HAP-1 (cell line): ENCODE measurements at regions of chr1 and their contacts with region 1.

Region 1: DNA sequence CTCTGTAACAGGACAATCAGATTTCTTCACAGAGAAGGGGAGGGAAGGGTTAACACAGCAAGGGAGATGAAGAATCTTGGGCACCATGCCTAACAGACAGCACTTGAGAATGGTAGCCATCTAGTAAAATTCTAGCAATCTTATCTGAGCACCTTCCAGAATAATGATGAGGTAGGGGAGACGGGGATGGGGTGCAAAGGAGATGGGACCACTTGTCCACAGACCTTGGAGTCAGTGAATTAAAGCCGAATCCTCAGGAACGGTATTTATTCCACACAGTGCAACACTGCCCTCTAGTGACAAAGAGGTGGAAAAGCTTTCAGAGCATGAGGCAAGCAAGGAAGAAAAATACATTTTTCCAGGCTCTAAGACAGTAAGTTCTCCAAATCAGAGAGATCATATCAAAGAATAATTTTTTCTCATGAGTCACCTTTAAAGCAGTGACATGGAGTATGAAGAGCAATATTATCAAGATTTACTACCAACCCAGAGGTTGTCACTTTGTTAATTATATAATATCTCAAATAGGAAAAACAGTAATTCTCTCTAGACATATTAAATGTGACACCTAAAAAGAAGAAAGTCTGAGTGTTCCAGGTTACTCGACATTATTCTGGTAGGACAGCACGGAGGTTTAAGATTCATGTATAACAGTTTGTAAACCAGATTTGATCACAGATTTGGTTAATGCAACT is 43.3 kb upstream of the LPAR3 start:
- DNase-seq: peak; percentile 41 to 71
- H3K4me3 ChIP-seq: no peak overlapping the region
- H3K4me1 ChIP-seq: no peaks in the 10 kb centered on the region; the same call in 1 of the 2 replicates
- H3K27me3 ChIP-seq: no peaks in the 10 kb centered on the region

Region 2: DNA sequence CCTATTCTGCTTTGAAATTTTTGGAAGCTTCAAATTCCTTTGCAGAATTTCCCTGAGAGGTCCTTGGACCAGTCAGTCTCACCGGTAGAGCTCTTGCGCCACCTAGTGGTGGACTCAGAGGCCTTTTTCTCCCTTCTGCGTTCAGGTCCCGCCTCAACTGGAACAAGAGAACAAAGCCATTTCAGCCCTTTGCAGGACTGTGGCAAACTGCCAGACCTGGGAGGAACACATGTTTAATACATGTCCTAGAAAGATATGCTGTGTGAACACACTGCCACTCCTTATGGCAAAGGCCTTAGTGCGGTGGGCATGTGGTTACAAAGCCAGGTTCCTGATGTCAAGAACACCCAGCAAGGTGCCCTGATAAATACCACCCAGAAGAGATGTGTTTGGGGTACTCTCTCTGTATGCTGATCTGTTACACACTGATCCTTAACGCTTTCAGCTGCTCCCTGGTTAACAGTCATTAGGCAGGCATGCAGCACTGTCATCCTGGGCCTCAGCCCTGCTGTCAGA is 163.8 kb before region 1 on chr1:
- in situ Hi-C with region 1: loop called (anchors 10 kb)
- DNase-seq: peak; percentile 73 to 89
- H3K4me3 ChIP-seq: no peak overlapping the region
- H3K4me1 ChIP-seq: no peaks in the 10 kb centered on the region; the same call in none of the 2 replicates
- H3K27me3 ChIP-seq: peaks cover 16% of the 10 kb centered on the region